Posterior vena cava (tissue), 2 donors: ENCODE measurements at regions of chr17 and their contacts with region 1.

Region 1: DNA sequence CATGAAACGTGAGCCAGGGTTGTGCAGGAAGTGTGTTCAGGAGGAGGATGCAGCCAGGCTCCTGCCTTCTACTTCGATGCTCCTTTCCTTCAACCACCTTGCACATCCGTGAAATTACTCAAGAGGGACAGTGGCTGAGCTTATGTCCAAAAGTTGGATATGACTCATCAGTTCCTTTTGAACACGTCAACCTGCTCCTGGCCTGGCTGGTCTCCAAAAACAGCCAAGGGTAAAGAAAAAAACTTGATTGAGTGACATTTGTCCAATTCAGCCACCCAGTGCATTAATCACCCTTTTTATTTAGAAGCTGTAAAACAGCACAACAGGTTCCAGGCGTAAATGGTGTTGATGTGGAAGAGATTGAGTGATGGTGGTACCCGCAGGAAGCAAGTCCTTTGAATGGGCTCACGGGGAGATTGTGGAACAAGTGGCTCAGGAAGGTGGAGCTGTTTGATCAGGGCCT is 173.5 kb upstream of the CACNG5 start:
- DNase-seq: no peak

Region 2: GRCh38 chr17:66098040-66098439 is 563.4 kb before region 1 on chr17:
- intact Hi-C with region 1: loop called in 1 of 2 experiments (anchors 5 kb)
- DNase-seq: no peak